H1 (cell line): ENCODE measurements at regions of chr10 and their contacts with region 1.

Region 1: GRCh38 chr10:50234486-50234885 is 16.8 kb downstream of the ASAH2 start:
- DNase-seq: no peak
- H3K4me3 ChIP-seq: no peak overlapping the region
- H3K27ac ChIP-seq: no peak overlapping the region
- H3K4me1 ChIP-seq: no peaks in the 10 kb centered on the region
- H3K27me3 ChIP-seq: no peaks in the 10 kb centered on the region
- CTCF ChIP-seq: no peak
- EP300 ChIP-seq: no peak
- POLR2A ChIP-seq: no peak
- RAD21 ChIP-seq: no peak

Region 2: GRCh38 chr10:49649294-49649693 is 585.2 kb before region 1 on chr10:
- CTCF ChIA-PET with region 1: no interaction called
- POLR2A ChIA-PET with region 1: no interaction called
- DNase-seq: peak; percentile 25 to 61
- H3K4me3 ChIP-seq: no peak overlapping the region
- H3K27ac ChIP-seq: no peak overlapping the region
- H3K4me1 ChIP-seq: peaks cover 0 to 4% (median 1%) of the 10 kb centered on the region in 4 experiments; a peak in 3 of 7 replicates
- H3K27me3 ChIP-seq: peaks cover 0 to 2% (median 0%) of the 10 kb centered on the region in 4 experiments; a peak in 2 of 7 replicates
- CTCF ChIP-seq: peak; percentile 5 to 17 (median 5); a peak in 2 of 4 replicates
- EP300 ChIP-seq: no peak
- POLR2A ChIP-seq: no peak
- RAD21 ChIP-seq: peak; percentile 4 to 26; a peak in 1 of 4 replicates

Region 3: DNA sequence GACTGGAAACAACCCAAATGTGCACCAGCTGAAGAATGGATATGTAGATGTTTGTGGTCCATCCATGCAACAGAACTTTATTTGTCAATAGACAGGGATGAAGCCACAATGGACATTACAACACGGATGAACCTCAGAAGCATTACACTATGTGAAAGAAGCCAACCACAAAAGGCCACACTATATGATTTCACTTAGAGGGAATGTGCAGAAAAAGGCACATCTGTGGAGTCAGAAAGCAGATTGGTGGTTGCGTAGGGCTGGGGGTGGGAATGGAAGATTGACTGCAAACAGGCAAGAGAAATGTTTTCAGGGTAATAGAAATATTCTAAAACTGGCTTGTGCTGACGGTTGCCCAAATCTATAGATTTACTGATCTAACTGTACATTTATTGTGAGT is 201.0 kb before region 1 on chr10:
- CTCF ChIA-PET with region 1: no interaction called
- POLR2A ChIA-PET with region 1: no interaction called
- DNase-seq: no peak
- H3K4me3 ChIP-seq: no peak overlapping the region
- H3K27ac ChIP-seq: no peak overlapping the region
- H3K4me1 ChIP-seq: no peaks in the 10 kb centered on the region
- H3K27me3 ChIP-seq: no peaks in the 10 kb centered on the region
- CTCF ChIP-seq: no peak
- EP300 ChIP-seq: no peak
- POLR2A ChIP-seq: no peak
- RAD21 ChIP-seq: no peak

Region 4: DNA sequence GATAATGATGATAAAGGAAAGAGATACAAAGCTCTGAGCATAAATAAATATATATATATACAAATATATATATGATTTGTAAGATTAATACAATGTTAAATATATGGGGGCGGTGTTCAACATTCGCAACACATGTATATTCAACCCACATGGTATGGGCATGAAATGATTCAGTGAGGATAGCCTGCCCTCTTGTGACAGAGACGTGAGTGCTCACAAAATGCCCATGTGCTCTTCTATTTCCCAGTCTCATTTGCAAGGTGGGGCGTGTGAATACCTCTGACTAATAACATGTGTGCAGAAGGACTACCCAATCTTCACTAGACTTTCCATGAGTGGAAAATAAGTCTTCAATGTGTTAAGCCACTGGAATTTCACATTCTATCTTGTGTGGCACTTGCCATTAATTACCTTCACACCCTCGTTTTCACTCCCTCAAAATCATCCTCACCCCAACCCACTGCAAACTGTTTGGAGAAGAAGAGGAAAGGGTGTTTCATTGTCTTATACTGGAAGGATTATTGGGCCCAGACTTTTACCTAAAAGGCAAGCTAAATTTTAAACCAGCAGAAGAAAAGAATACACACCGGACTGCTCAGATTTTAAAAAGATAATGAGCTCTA is 10.0 kb before region 1 on chr10:
- CTCF ChIA-PET with region 1: interaction called, 29 read pairs
- POLR2A ChIA-PET with region 1: no interaction called
- DNase-seq: no peak
- H3K4me3 ChIP-seq: no peak overlapping the region
- H3K27ac ChIP-seq: no peak overlapping the region
- H3K4me1 ChIP-seq: no peaks in the 10 kb centered on the region
- H3K27me3 ChIP-seq: no peaks in the 10 kb centered on the region
- CTCF ChIP-seq: peak; percentile 37 to 81 (median 68)
- EP300 ChIP-seq: no peak
- POLR2A ChIP-seq: no peak
- RAD21 ChIP-seq: peak; percentile 92 to 93

Region 5: GRCh38 chr10:50291261-50291850 is 56.9 kb after region 1 on chr10:
- CTCF ChIA-PET with region 1: no interaction called
- POLR2A ChIA-PET with region 1: no interaction called
- DNase-seq: no peak
- H3K4me3 ChIP-seq: no peak overlapping the region
- H3K27ac ChIP-seq: no peak overlapping the region
- H3K4me1 ChIP-seq: no peaks in the 10 kb centered on the region
- H3K27me3 ChIP-seq: no peaks in the 10 kb centered on the region
- CTCF ChIP-seq: peak in 2 of 3 experiments; percentile 46 to 47; a peak in 3 of 4 replicates
- EP300 ChIP-seq: no peak
- POLR2A ChIP-seq: no peak
- RAD21 ChIP-seq: peak; percentile 72 to 77

Region 6: DNA sequence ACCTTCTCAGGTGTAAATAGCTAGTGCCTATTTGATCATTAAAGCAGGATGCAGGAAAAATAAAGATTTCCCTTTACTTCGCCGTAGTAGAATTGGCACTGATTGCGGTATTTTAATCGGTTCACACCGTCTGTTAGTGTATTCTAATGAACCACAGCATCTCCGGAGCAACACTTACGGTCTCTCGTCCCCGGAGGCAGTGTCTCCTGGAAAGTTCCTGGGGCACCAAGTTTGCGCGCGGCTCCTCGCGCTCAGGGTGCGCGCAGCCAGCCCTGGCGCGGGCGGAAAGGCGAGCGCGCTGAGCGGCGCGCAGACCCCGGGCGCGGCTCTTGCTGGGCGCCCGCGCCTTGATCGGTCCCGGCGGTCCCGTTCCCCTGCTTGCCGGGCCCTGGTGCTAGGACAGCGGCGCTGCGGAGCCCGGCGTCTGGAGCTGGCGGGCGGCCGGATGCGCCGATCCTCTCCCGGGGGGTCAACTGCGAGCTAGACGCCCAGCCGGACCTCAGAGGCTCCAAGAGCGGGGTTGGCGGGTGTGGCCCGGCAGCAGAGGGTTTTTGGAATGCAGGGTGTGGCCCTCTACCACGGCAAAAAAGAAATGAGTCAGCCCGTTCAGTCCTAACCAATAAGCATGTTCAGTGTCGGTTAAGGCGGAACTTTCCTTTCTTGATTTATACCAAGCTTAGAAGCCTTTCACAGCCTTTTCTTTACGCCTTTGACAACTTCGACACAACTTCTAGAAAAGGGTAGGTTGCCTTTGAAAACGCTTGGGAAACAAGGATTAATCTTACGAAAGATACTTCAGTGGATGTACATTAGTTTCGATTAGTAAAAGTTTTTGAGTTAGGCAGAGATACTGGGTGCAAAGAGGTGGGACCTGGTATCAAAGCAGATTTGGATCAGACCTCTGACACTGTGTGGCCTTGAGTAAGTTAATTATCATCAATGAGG is 183.7 kb after region 1 on chr10:
- CTCF ChIA-PET with region 1: no interaction called
- POLR2A ChIA-PET with region 1: no interaction called
- DNase-seq: peak; percentile 29 to 76
- H3K4me3 ChIP-seq: peak overlapping the region; percentile 40 to 63 (median 48)
- H3K27ac ChIP-seq: no peak overlapping the region
- H3K4me1 ChIP-seq: peaks cover 0 to 9% (median 5%) of the 10 kb centered on the region in 4 experiments; a peak in 6 of 7 replicates
- H3K27me3 ChIP-seq: no peaks in the 10 kb centered on the region
- CTCF ChIP-seq: no peak
- EP300 ChIP-seq: no peak
- POLR2A ChIP-seq: 0 out of 3 replicates have a peak, but pooled peaks of 1 of the 2 experiments have one; percentile 26
- RAD21 ChIP-seq: peak in 1 of 2 experiments; percentile 6; a peak in 2 of 4 replicates